Heart right ventricle (tissue), 16 donors: ENCODE measurements at regions of chr12 and their contacts with region 1.

Region 1: GRCh38 chr12:80269803-80270552 is 170.6 kb downstream of the OTOGL start:
- DNase-seq: peak in 1 of 2 donors; percentile 18
- ATAC-seq: peak in 5 of 8 donors; percentile 33 to 71 (median 63)
- H3K4me3 ChIP-seq: peak overlapping the region in 1 of 10 donors; percentile 19
- H3K27ac ChIP-seq: no peak overlapping the region
- H3K4me1 ChIP-seq: peaks cover 0 to 9% (median 0%) of the 10 kb centered on the region in 9 donors
- H3K27me3 ChIP-seq: peaks cover 0 to under 1% (median 0%) of the 10 kb centered on the region in 7 donors
- CTCF ChIP-seq: peak; percentile 54 to 84 (median 70)

Region 2: GRCh38 chr12:79407671-79408622 is 862.0 kb before region 1 on chr12:
- intact Hi-C with region 1: loop called in 4 of 10 experiments (anchors 5 to 10 kb)
- DNase-seq: peak in 1 of 2 donors; percentile 37
- ATAC-seq: peak in 7 of 8 donors; percentile 51 to 86 (median 63)
- H3K4me3 ChIP-seq: no peak overlapping the region
- H3K27ac ChIP-seq: no peak overlapping the region
- H3K4me1 ChIP-seq: peaks cover 0 to 7% (median 0%) of the 10 kb centered on the region in 9 donors
- H3K27me3 ChIP-seq: no peaks in the 10 kb centered on the region
- CTCF ChIP-seq: peak in 8 of 9 donors; percentile 25 to 69 (median 54)

Region 3: GRCh38 chr12:79555028-79555930 is 714.7 kb before region 1 on chr12:
- intact Hi-C with region 1: loop called (anchors 2 to 10 kb)
- DNase-seq: peak in 1 of 2 donors; percentile 15
- ATAC-seq: peak in 2 of 8 donors; percentile 40 to 47
- H3K4me3 ChIP-seq: no peak overlapping the region
- H3K27ac ChIP-seq: no peak overlapping the region
- H3K4me1 ChIP-seq: peaks cover 0 to 47% (median 12%) of the 10 kb centered on the region in 9 donors
- H3K27me3 ChIP-seq: no peaks in the 10 kb centered on the region
- CTCF ChIP-seq: peak; percentile 25 to 79 (median 58)

Region 4: GRCh38 chr12:79886917-79887519 is 383.0 kb before region 1 on chr12:
- intact Hi-C with region 1: loop called in 1 of 10 experiments (anchors 5 kb)
- DNase-seq: no peak
- ATAC-seq: peak in 4 of 8 donors; percentile 54 to 77 (median 59)
- H3K4me3 ChIP-seq: no peak overlapping the region
- H3K27ac ChIP-seq: no peak overlapping the region
- H3K4me1 ChIP-seq: peaks cover 0 to 93% (median 74%) of the 10 kb centered on the region in 9 donors
- H3K27me3 ChIP-seq: no peaks in the 10 kb centered on the region
- CTCF ChIP-seq: peak in 8 of 9 donors; percentile 22 to 68 (median 60)

Region 5: DNA sequence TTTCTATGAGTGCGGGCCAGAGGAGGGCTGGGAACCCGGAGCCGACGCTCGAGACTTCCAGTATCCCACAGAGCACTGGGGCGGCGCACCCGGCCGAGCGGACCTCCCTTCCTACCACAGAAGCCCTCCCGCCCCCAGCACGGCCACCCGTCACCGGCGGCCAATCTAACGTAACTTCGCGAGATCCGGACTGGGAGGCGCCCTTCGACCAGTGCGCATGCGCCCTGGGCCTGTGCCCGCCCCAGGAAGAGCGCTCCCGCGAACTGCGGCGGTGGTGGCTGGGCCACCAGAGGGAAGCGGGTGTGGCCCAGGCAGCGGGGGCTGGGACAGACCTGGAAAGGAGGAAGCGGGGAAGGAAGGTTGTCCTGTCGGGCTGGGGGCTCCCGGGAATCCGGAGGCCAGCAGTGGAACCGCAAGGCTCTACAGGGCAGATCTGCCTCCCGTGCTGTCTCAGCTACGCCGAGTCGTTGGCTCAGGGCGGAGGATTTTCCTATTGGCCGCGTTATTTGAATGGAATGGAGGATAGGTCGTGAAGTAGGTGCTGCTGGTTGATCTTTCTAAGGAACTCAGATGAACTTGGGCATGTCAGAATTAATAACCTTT is 334.9 kb before region 1 on chr12 and contains the start of gene PPP1R12A:
- intact Hi-C with region 1: no loop called
- DNase-seq: peak; percentile 98
- ATAC-seq: peak; percentile 97 to 100 (median 98)
- H3K4me3 ChIP-seq: peak within 1 kb of the TSS; percentile 74 to 97 (median 87)
- H3K27ac ChIP-seq: peak within 1 kb of the TSS; percentile 90 to 98 (median 96)
- H3K4me1 ChIP-seq: peaks cover 0 to 51% (median 44%) of the 10 kb centered on the region in 9 donors
- H3K27me3 ChIP-seq: no peaks in the 10 kb centered on the region
- CTCF ChIP-seq: peak in 6 of 9 donors; percentile 16 to 40 (median 28)
- total RNA-seq, gene PPP1R12A: 46.3 to 73.5 (median 60.5) TPM

Region 6: DNA sequence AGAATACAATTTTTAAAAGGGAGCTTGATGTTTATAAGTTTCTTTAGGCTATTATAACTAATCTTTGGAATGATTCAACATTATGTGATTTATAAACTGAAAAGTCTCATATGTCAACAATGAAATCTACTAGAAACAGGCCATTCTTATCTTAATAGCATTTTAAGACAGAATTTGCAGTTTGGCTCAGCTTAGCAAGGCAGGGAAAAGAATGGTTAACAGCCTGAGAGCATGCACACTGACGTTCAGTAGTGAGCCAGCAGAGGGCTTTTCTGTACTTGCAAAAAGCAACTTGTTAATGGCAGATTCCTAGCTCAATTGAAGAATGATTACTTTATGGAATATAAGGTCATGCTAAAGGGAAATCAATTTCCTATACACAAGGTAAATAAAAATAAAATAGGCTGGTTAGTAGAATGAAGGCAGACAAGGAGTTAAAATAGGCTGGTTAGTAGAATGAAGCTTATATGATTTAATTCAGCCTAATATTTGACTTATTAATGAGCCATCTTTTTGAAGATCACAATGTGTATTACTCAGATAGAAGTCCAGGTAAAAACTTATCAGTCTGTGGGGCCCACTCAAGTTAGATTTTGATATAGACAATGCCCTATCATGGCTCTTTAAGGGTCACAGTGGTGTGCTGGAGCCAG is 74.8 kb before region 1 on chr12:
- intact Hi-C with region 1: loop called in 9 of 10 experiments (anchors 1 to 5 kb)
- DNase-seq: peak in 1 of 2 donors; percentile 29
- ATAC-seq: peak in 5 of 8 donors; percentile 53 to 82 (median 68)
- H3K4me3 ChIP-seq: no peak overlapping the region
- H3K27ac ChIP-seq: no peak overlapping the region
- H3K4me1 ChIP-seq: peaks cover 0 to 6% (median 0%) of the 10 kb centered on the region in 9 donors
- H3K27me3 ChIP-seq: no peaks in the 10 kb centered on the region
- CTCF ChIP-seq: peak; percentile 21 to 73 (median 53)

Region 7: DNA sequence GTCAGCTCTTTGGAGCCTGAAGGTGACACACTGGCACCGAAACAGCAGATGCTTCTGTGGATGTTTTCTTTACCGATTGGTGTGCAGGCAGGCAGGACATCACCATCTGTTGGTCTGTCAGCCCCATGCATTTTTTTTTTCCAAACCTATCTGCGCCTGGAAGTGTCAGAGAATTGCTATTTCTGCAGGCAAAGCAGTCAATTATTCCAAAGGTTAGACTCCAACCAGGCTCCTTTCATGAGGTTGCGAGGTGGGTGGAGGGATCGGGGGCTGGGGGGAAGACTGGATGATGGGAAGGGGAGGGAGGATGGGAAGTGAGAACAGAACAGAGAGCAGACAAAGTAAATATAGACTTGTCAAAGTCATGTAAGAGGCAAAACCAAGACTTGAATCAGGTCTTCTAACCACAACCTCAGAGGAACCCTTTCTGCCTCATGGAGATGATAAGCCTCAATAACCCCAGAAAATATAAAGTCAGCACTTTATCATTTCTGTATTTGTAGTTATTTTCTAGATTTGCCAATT is 52.9 kb before region 1 on chr12:
- intact Hi-C with region 1: loop called in 1 of 10 experiments (anchors 10 kb)
- DNase-seq: no peak
- ATAC-seq: peak in 1 of 8 donors; percentile 56
- H3K4me3 ChIP-seq: no peak overlapping the region
- H3K27ac ChIP-seq: peak overlapping the region in 2 of 10 donors; percentile 13 to 18
- H3K4me1 ChIP-seq: peaks cover 0 to 6% (median 2%) of the 10 kb centered on the region in 9 donors
- H3K27me3 ChIP-seq: no peaks in the 10 kb centered on the region
- CTCF ChIP-seq: no peak

Region 8: DNA sequence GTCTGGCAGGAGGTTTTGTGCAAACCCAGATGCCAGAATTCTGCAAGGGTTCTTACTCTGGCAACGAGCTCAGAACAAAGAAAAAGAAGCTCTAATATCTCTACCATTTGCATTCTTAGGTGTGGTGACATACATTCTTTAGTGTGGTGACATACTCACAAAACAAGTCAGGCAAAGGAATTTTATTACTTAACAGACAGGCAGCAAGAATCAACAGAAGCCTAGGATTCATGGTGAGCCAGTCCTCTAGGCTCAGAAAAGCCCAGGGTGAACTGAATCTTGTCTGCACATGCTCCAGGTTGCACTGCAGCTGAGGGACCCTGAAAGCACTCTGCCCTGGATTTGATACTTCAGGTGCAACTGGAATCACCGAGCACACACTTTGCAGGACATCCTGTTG is 51.7 kb after region 1 on chr12:
- intact Hi-C with region 1: no loop called
- DNase-seq: no peak
- ATAC-seq: no peak
- H3K4me3 ChIP-seq: no peak overlapping the region
- H3K27ac ChIP-seq: no peak overlapping the region
- H3K4me1 ChIP-seq: no peaks in the 10 kb centered on the region
- H3K27me3 ChIP-seq: peaks cover 0 to 3% (median 0%) of the 10 kb centered on the region in 7 donors
- CTCF ChIP-seq: no peak